Common myeloid progenitor, CD34-positive (primary cell): ENCODE measurements at regions of chr20 and their contacts with region 1.

Region 1: GRCh38 chr20:48706173-48707015 is 121.4 kb downstream of the PREX1 start:
- DNase-seq: no peak
- H3K4me3 ChIP-seq: no peak overlapping the region
- H3K27ac ChIP-seq: no peak overlapping the region
- H3K4me1 ChIP-seq: peaks cover 0 to 20% (median 12%) of the 10 kb centered on the region in 4 experiments
- H3K27me3 ChIP-seq: no peaks in the 10 kb centered on the region

Region 2: DNA sequence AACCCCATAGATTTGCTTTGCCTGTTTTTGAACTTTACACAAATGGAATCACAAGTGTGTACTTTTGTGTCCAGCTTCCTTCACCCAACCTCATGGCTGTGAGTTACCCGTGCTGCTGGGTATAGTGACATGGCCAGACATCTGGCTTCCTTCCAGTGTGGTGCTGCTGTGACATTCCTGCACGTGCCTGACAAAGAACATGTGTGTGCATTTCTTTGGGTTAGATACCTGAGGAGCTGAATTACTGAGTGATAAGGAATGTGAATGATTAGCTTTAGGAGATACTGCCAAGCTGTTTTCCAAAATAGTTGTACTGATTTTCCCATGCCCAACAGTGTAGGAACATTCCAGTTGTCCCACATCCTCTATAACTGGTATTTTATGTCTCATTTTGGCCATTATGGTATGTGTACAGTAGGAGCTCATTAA is 11.2 kb before region 1 on chr20:
- CTCF ChIA-PET with region 1: interaction called, 10 read pairs
- POLR2A ChIA-PET with region 1: interaction called, 3 read pairs
- DNase-seq: no peak
- H3K4me3 ChIP-seq: no peak overlapping the region
- H3K27ac ChIP-seq: no peak overlapping the region
- H3K4me1 ChIP-seq: no peaks in the 10 kb centered on the region
- H3K27me3 ChIP-seq: no peaks in the 10 kb centered on the region